Cardiac septum (tissue), 1 donor: ENCODE measurements at regions of chr12 and their contacts with region 1.

Region 1: DNA sequence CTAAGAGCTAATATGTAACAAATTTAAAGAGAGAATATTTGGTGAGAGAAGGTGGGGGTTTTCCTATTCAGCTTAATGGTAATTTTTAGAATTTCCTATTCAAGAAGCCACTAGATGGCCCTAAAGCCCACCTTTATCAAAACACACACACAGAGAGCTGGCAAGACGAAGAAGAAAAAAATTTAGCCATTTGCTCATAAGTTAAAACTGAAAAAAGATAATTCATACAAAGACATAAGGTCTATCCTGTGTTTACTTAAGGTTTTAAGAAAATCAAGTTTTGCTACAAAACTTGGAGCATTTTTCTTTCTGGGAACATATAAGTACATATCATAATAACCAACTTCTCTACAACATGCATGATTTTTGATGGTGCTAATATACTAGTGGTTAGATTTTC is 46.8 kb upstream of the PCED1B start:
- DNase-seq: no peak

Region 2: GRCh38 chr12:47079981-47080791 is 47.5 kb after region 1 on chr12:
- intact Hi-C with region 1: no loop called
- DNase-seq: peak; percentile 78

Region 3: GRCh38 chr12:47307680-47308399 is 275.2 kb after region 1 on chr12:
- intact Hi-C with region 1: loop called (anchors 5 kb)
- DNase-seq: no peak

Region 4: DNA sequence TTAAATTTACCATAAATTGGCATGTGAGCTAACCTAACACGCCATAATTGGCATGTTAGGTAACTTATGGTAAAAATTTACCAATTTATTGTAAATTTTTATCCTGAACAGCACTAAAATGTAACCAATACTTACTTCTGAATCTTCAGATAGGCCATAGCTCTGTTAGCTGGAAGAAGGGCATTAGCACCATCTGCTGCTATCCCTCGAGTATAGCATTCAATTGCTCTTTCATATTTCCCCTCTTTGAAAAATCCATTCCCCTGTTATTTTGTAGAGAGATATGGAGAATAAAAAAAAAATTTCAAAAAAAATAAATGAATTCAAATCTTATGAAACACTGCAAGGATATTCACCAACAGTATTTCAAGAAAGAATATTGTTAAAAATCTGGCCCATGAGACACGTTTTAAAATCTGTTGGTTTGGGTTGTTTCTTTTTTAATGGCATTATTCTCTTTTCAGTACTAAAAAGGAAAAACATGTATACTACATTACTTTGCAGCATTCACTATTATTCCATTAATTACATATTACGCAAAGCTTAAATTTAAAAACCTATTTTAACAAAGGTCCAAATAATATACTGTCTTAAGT is 654.1 kb after region 1 on chr12:
- intact Hi-C with region 1: loop called (anchors 5 kb)
- DNase-seq: no peak